ENCODE measurements at regions of chr11 and their contacts with region 1.

Region 1: GRCh38 chr11:32176223-32176934 is 85.5 kb downstream of the RCN1 start:
- DNase-seq: peak; percentile 77
- H3K4me3 ChIP-seq: no peak overlapping the region
- H3K27ac ChIP-seq: no peak overlapping the region
- H3K4me1 ChIP-seq: peaks cover 0 to 9% (median 2%) of the 10 kb centered on the region in 4 donors
- H3K27me3 ChIP-seq: peaks cover 21% of the 10 kb centered on the region
- CTCF ChIP-seq: peak; percentile 73 to 90 (median 86)
- EP300 ChIP-seq: no peak
- POLR2A ChIP-seq: no peak

Region 2: DNA sequence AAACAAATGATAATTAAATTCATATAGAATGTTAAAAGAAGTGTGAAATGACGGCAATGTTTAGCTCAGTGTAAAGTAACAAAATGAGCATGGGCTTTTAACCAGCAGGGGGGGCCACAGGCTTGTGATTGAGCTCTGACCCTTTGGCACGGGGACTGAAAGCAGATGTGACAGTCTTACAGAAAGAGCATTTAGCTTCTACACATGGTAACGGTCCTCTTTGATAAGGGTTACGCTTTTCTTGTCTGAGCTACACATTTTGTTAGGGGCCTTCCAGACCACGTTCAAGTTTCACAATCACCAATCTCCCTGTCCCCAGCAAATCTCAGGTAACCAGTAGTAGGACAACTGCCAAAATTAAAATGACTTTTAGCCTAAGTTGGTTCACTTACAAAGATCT is 1069.3 kb before region 1 on chr11:
- in situ Hi-C with region 1: loop called in 1 of 4 experiments (anchors 25 kb)
- intact Hi-C with region 1: no loop called
- DNase-seq: peak; percentile 38
- H3K4me3 ChIP-seq: no peak overlapping the region
- H3K27ac ChIP-seq: no peak overlapping the region
- H3K4me1 ChIP-seq: no peaks in the 10 kb centered on the region
- H3K27me3 ChIP-seq: no peaks in the 10 kb centered on the region
- CTCF ChIP-seq: peak; percentile 26 to 55 (median 37)
- EP300 ChIP-seq: no peak
- POLR2A ChIP-seq: no peak

Region 3: GRCh38 chr11:31240338-31240904 is 936.0 kb before region 1 on chr11:
- in situ Hi-C with region 1: loop called in 1 of 4 experiments (anchors 25 kb)
- intact Hi-C with region 1: no loop called
- DNase-seq: no peak
- H3K4me3 ChIP-seq: no peak overlapping the region
- H3K27ac ChIP-seq: no peak overlapping the region
- H3K4me1 ChIP-seq: no peaks in the 10 kb centered on the region
- H3K27me3 ChIP-seq: no peaks in the 10 kb centered on the region
- CTCF ChIP-seq: peak in 2 of 5 experiments; percentile 12 to 18
- EP300 ChIP-seq: no peak
- POLR2A ChIP-seq: no peak

Region 4: DNA sequence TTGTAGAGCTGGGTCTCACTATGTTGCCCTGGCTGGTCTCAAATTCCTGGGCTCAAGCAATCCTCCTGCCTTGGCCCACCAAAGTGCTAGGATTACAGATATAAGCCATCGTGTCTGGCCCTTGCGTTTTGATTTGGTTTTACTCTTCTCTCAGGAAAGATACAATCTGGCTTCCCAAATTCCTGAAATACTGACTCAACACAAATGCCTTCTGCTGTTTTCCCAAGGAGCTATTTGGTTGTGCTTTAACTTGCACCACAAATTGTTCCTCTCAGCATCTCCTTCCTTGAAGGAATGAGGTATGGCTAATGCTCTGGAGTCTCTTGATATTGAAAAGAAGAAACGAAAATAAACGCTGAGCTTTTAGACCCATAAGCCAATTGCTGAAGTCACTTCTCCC is 255.3 kb before region 1 on chr11:
- in situ Hi-C with region 1: no loop called
- intact Hi-C with region 1: no loop called
- DNase-seq: no peak
- H3K4me3 ChIP-seq: no peak overlapping the region
- H3K27ac ChIP-seq: no peak overlapping the region
- H3K4me1 ChIP-seq: no peaks in the 10 kb centered on the region
- H3K27me3 ChIP-seq: no peaks in the 10 kb centered on the region
- CTCF ChIP-seq: no peak
- EP300 ChIP-seq: no peak
- POLR2A ChIP-seq: no peak

Region 5: GRCh38 chr11:31995525-31996094 is 180.8 kb before region 1 on chr11:
- in situ Hi-C with region 1: no loop called
- intact Hi-C with region 1: no loop called
- DNase-seq: no peak
- H3K4me3 ChIP-seq: no peak overlapping the region
- H3K27ac ChIP-seq: no peak overlapping the region
- H3K4me1 ChIP-seq: no peaks in the 10 kb centered on the region
- H3K27me3 ChIP-seq: no peaks in the 10 kb centered on the region
- CTCF ChIP-seq: no peak
- EP300 ChIP-seq: no peak
- POLR2A ChIP-seq: no peak

Region 6: DNA sequence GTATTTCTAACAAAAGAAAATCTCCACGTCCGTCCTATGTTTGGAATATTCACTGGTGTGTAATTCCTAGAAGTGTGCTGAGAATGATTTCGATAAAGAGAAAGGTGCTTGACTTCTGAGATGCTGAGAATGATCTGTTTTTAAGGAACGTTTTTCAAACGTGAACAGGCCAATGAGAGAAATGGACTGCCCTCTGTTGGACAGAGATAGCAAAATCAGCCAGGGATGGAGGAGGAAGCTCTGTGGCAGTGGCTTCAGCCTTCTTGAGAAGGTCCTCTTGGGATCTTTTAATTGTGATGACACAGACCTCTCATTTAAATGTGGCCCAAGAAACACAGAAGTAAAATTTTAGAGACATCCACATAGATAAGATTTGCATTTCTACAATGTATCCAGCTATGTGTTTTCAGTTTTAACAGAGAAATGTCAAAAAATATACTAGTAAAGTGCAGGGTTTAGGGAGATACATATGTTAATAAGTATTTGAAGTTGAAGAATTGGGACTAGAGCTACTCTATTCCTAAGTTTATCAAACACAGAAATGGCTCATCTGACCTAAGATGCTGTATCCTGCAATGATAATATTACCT is 169.5 kb before region 1 on chr11:
- in situ Hi-C with region 1: no loop called
- intact Hi-C with region 1: no loop called
- DNase-seq: no peak
- H3K4me3 ChIP-seq: no peak overlapping the region
- H3K27ac ChIP-seq: no peak overlapping the region
- H3K4me1 ChIP-seq: no peaks in the 10 kb centered on the region
- H3K27me3 ChIP-seq: peaks cover 23% of the 10 kb centered on the region
- CTCF ChIP-seq: peak in 3 of 5 experiments; percentile 26 to 42 (median 34)
- EP300 ChIP-seq: no peak
- POLR2A ChIP-seq: no peak

Region 7: GRCh38 chr11:32052218-32052617 is 124.2 kb before region 1 on chr11:
- in situ Hi-C with region 1: loop called (anchors 5 kb)
- intact Hi-C with region 1: loop called (anchors 2 kb)
- DNase-seq: peak; percentile 46
- H3K4me3 ChIP-seq: no peak overlapping the region
- H3K27ac ChIP-seq: no peak overlapping the region
- H3K4me1 ChIP-seq: no peaks in the 10 kb centered on the region
- H3K27me3 ChIP-seq: peaks cover 17% of the 10 kb centered on the region
- CTCF ChIP-seq: peak; percentile 68 to 78 (median 76)
- EP300 ChIP-seq: no peak
- POLR2A ChIP-seq: no peak